IMR-90 (cell line): ENCODE measurements at regions of chr4 and their contacts with region 1.

Region 1: GRCh38 chr4:103086551-103086950 is 10.0 kb upstream of the SLC9B2 start:
- DNase-seq: no peak
- ATAC-seq: no peak
- H3K4me3 ChIP-seq: no peak overlapping the region
- H3K27ac ChIP-seq: no peak overlapping the region
- H3K4me1 ChIP-seq: peaks cover 3% of the 10 kb centered on the region; the same call in 1 of the 2 replicates
- H3K27me3 ChIP-seq: no peaks in the 10 kb centered on the region
- CTCF ChIP-seq: no peak
- POLR2A ChIP-seq: no peak
- RAD21 ChIP-seq: no peak

Region 2: GRCh38 chr4:102945066-102945465 is 141.5 kb before region 1 on chr4:
- CTCF ChIA-PET with region 1: no interaction called
- POLR2A ChIA-PET with region 1: no interaction called
- dilution Hi-C with region 1: no loop called
- in situ Hi-C with region 1: no loop called
- intact Hi-C with region 1: no loop called
- DNase-seq: no peak
- ATAC-seq: no peak
- H3K4me3 ChIP-seq: no peak overlapping the region
- H3K27ac ChIP-seq: no peak overlapping the region
- H3K4me1 ChIP-seq: no peaks in the 10 kb centered on the region
- H3K27me3 ChIP-seq: no peaks in the 10 kb centered on the region
- CTCF ChIP-seq: no peak
- POLR2A ChIP-seq: no peak
- RAD21 ChIP-seq: no peak

Region 3: GRCh38 chr4:103060453-103061148 is 25.9 kb before region 1 on chr4:
- CTCF ChIA-PET with region 1: interaction called, 10 read pairs
- POLR2A ChIA-PET with region 1: no interaction called
- dilution Hi-C with region 1: no loop called
- in situ Hi-C with region 1: no loop called
- intact Hi-C with region 1: no loop called
- DNase-seq: no peak
- ATAC-seq: no peak
- H3K4me3 ChIP-seq: no peak overlapping the region
- H3K27ac ChIP-seq: no peak overlapping the region
- H3K4me1 ChIP-seq: no peaks in the 10 kb centered on the region
- H3K27me3 ChIP-seq: no peaks in the 10 kb centered on the region
- CTCF ChIP-seq: no peak
- POLR2A ChIP-seq: no peak
- RAD21 ChIP-seq: no peak

Region 4: DNA sequence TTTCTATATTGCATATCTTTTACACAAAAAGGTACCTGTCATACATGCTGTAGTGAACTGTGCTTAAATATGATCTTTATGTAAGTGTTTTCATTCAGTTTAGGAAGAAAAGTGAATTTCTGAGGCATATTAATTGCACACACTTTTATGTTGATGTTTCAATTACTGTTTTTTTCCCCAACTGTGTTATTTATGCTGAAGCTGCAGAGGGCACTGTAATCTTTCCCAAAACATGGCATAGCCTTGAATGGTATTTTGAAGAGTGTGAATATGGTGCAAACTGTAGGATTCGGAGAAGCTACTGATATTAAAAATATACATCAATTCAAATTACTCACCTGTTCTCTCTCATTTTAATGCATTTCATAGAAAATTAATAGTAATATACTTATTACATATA is 117.6 kb after region 1 on chr4:
- CTCF ChIA-PET with region 1: no interaction called
- POLR2A ChIA-PET with region 1: no interaction called
- dilution Hi-C with region 1: no loop called
- in situ Hi-C with region 1: no loop called
- intact Hi-C with region 1: no loop called
- DNase-seq: no peak
- ATAC-seq: no peak; the same call in 1 of the 2 replicates
- H3K4me3 ChIP-seq: no peak overlapping the region
- H3K27ac ChIP-seq: no peak overlapping the region
- H3K4me1 ChIP-seq: no peaks in the 10 kb centered on the region
- H3K27me3 ChIP-seq: peaks cover 4% of the 10 kb centered on the region; the same call in 1 of the 2 replicates
- CTCF ChIP-seq: peak; percentile 37
- POLR2A ChIP-seq: no peak
- RAD21 ChIP-seq: peak; percentile 40; the same call in 1 of the 2 replicates